ENCODE measurements at regions of chr1 and their contacts with region 1.

Region 1: GRCh38 chr1:151839457-151840405 is at the start of gene C2CD4D:
- DNase-seq: peak; percentile 84
- ATAC-seq: peak; percentile 76
- H3K4me3 Mint-ChIP-seq: peak within 1 kb of the TSS; percentile 72
- H3K27ac Mint-ChIP-seq: peak within 1 kb of the TSS; percentile 86
- H3K4me1 Mint-ChIP-seq: peaks cover 37% of the 10 kb centered on the region
- H3K27me3 Mint-ChIP-seq: no peaks in the 10 kb centered on the region
- total RNA-seq, gene C2CD4D: 2.1 to 2.4 TPM

Region 2: DNA sequence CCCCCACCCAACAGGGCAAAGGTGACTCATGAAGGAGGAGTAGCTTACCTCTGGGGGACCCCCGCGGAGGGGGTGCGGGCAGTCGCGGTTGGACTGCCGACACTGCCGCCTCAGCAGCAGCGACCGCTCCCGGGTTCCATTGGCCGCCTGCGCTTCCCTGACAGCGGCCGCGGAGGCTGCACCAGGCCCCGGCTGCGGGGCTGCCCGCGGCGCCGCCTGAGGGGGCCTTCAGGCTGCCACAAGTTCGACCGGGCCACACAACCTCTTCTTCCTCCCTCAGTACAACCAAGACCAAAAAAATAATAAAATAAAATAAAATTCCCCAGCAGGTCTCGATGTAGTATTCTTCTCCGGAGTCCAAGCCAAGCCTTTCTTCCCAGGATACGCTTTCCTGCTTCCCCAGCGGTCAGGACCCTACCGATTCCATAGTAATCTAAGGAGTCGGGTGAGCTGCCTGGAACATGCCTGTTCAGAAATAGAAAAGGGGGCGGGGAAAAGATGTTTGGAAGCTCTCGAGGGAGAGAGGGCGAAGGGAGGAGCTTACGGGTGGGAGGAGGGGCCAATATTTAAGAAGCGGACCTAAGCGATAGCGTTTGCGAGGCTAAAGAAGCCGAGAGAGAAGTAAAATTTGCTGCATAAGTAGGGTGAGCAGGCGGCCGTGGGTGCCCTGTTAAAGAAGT is 512.4 kb before region 1 on chr1 and contains the start of gene PI4KB:
- CTCF ChIA-PET with region 1: no interaction called
- POLR2A ChIA-PET with region 1: no interaction called
- intact Hi-C with region 1: loop called in 1 of 2 experiments (anchors 5 kb)
- DNase-seq: peak; percentile 92
- ATAC-seq: peak; percentile 94
- H3K4me3 Mint-ChIP-seq: peak within 1 kb of the TSS; percentile 92
- H3K27ac Mint-ChIP-seq: peak within 1 kb of the TSS; percentile 95
- H3K4me1 Mint-ChIP-seq: peaks cover 30% of the 10 kb centered on the region
- H3K27me3 Mint-ChIP-seq: no peaks in the 10 kb centered on the region
- total RNA-seq, gene PI4KB: 53.0 to 54.5 TPM

Region 3: GRCh38 chr1:151459331-151460046 is 380.2 kb before region 1 on chr1 and contains the start of gene POGZ:
- CTCF ChIA-PET with region 1: no interaction called
- POLR2A ChIA-PET with region 1: no interaction called
- intact Hi-C with region 1: loop called in 1 of 2 experiments (anchors 5 kb)
- DNase-seq: peak; percentile 97
- ATAC-seq: peak; percentile 80
- H3K4me3 Mint-ChIP-seq: peak within 1 kb of the TSS; percentile 83
- H3K27ac Mint-ChIP-seq: peak within 1 kb of the TSS; percentile 94
- H3K4me1 Mint-ChIP-seq: peaks cover 24% of the 10 kb centered on the region
- H3K27me3 Mint-ChIP-seq: peaks cover 19% of the 10 kb centered on the region
- total RNA-seq, gene POGZ: 81.3 to 104 TPM

Region 4: DNA sequence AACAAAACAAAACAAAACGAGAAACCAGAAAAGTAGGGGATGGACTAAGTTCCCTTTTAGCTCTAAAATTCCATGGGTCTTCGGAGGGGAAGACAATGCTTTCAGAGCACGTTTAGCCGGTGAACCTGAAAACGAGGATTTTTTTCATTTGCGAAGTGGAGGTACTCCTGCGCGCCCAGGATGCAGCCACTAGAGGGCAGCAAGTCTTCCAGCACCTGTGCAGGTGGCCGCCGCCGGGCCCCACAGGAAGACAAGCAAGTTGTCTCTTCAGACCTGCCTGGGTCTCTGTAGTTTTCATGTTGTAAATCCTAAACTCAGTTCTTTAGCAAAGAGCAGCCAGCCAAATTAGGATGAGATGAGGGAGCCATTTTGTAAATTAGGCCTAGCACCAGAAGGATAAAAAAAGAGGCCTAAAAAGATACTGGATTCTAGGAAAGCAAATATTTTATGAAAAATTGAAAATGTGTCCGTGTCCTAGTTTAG is 245.5 kb before region 1 on chr1:
- CTCF ChIA-PET with region 1: interaction called, 11 read pairs
- POLR2A ChIA-PET with region 1: no interaction called
- intact Hi-C with region 1: loop called (anchors 1 kb)
- DNase-seq: peak; percentile 94
- ATAC-seq: peak; percentile 100
- H3K4me3 Mint-ChIP-seq: peak overlapping the region; percentile 53
- H3K27ac Mint-ChIP-seq: peak overlapping the region; percentile 29
- H3K4me1 Mint-ChIP-seq: peaks cover 9% of the 10 kb centered on the region
- H3K27me3 Mint-ChIP-seq: peaks cover 5% of the 10 kb centered on the region

Region 5: DNA sequence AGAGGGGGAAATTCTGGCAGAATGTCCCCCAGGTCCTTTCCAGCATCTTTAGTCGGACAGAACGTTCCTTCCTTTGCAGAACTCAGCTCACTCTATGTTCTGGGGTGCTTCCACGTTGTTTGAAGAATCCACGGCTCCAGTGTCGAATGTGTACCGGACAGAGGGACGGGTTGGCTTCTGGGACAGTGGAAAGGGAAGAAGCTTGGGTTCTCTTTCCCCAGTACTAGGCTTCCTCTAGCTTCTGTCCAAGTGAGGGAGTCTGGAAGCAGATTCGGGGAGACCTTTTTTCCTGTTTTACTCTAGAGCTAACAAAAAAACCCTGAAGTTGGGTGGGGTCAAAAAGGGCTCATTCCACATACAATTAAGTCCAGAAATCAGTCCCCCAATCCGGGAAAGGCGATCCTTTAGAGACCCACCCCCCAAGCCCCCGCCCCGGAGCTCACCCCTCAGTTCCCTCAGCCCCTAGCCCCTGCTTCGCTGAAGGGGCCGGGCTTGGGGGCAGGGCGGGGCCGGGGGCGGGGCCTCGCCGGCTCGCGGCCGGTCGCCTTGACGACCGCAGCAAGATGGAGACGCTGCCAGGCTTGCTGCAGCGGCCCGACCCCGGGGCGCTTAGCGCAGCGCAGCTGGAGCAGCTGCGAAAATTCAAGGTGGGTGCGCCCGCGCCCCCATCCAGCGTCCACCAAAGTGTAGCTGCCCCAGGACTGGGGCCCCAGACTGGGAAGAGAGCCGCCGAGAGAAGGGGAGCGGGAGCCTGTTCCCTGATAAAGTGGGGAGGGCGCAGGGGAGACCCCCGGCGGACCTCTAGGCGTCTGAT is 118.5 kb before region 1 on chr1 and contains the start of gene RIIAD1:
- CTCF ChIA-PET with region 1: interaction called, 4 read pairs
- POLR2A ChIA-PET with region 1: no interaction called
- intact Hi-C with region 1: loop called in 1 of 2 experiments (anchors 2 kb)
- DNase-seq: peak; percentile 67
- ATAC-seq: peak; percentile 89
- H3K4me3 Mint-ChIP-seq: peak within 1 kb of the TSS; percentile 61
- H3K27ac Mint-ChIP-seq: no peak within 1 kb of the TSS
- H3K4me1 Mint-ChIP-seq: peaks cover 21% of the 10 kb centered on the region
- H3K27me3 Mint-ChIP-seq: peaks cover 55% of the 10 kb centered on the region
- total RNA-seq, gene RIIAD1: not detected

Region 6: DNA sequence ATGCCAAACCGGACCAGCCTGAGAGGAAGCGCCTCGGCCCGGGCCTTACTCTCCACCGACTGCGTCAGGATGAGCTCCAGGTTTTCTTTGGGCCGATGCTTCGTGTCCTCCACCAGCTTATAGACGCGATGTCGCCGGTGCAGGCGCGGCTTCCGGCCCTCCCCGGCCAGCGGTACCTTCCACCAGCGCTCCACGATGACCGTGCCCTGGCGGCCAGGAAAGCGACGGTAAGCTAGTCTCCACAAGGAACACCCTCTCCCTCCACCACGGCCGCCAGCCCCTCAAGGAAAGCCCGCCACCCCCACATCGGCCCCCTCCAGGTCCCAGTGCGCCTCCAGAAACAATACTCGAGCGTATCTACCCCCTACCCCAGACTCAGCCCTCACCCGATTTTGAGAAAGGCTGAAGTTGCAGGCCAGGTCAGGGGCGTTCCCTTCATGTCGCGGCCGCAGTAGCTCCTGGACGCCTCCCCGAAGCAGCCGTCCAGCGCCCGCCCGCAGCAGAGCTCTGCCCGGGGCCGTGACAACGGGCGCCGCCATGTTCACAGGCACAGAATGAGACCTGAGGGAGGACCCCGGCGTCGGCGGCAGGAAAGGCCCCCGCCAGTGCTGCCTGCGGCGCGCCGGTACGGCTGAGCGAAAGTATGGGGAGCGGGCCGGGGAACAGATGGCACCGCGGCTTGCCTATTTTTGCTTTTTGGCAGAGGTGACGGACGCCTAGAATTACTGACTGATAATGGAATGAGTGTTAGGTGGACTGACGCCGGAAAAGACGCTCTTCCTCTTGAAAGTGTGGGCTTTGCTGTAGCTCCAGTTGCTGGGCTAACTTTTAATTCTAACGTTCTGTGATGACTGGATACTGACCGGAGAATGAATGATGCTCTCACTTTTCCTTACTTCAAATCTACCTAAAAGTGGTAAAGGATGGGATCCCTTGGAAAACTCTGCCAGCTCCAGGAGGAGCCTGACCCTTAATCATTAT is 76.5 kb before region 1 on chr1 and contains the start of gene MRPL9:
- CTCF ChIA-PET with region 1: interaction called, 12 read pairs
- POLR2A ChIA-PET with region 1: no interaction called
- intact Hi-C with region 1: loop called (anchors 1 to 5 kb)
- DNase-seq: peak; percentile 94
- ATAC-seq: peak; percentile 99
- H3K4me3 Mint-ChIP-seq: peak within 1 kb of the TSS; percentile 89
- H3K27ac Mint-ChIP-seq: peak within 1 kb of the TSS; percentile 95
- H3K4me1 Mint-ChIP-seq: peaks cover 24% of the 10 kb centered on the region
- H3K27me3 Mint-ChIP-seq: no peaks in the 10 kb centered on the region
- total RNA-seq, gene MRPL9: 139 to 184 TPM

Region 7: GRCh38 chr1:152001391-152002249 is 161.9 kb after region 1 on chr1:
- CTCF ChIA-PET with region 1: interaction called, 4 read pairs
- POLR2A ChIA-PET with region 1: no interaction called
- intact Hi-C with region 1: loop called in 1 of 2 experiments (anchors 5 kb)
- DNase-seq: peak; percentile 85
- ATAC-seq: peak; percentile 83
- H3K4me3 Mint-ChIP-seq: no peak overlapping the region
- H3K27ac Mint-ChIP-seq: no peak overlapping the region
- H3K4me1 Mint-ChIP-seq: peaks cover 7% of the 10 kb centered on the region
- H3K27me3 Mint-ChIP-seq: peaks cover 2% of the 10 kb centered on the region

Region 8: GRCh38 chr1:152061952-152062351 is 222.2 kb after region 1 on chr1:
- CTCF ChIA-PET with region 1: no interaction called
- POLR2A ChIA-PET with region 1: no interaction called
- intact Hi-C with region 1: no loop called
- DNase-seq: no peak
- ATAC-seq: no peak
- H3K4me3 Mint-ChIP-seq: no peak overlapping the region
- H3K27ac Mint-ChIP-seq: no peak overlapping the region
- H3K4me1 Mint-ChIP-seq: no peaks in the 10 kb centered on the region
- H3K27me3 Mint-ChIP-seq: peaks cover 22% of the 10 kb centered on the region